ENCODE measurements at regions of chr9 and their contacts with region 1.

Region 1: DNA sequence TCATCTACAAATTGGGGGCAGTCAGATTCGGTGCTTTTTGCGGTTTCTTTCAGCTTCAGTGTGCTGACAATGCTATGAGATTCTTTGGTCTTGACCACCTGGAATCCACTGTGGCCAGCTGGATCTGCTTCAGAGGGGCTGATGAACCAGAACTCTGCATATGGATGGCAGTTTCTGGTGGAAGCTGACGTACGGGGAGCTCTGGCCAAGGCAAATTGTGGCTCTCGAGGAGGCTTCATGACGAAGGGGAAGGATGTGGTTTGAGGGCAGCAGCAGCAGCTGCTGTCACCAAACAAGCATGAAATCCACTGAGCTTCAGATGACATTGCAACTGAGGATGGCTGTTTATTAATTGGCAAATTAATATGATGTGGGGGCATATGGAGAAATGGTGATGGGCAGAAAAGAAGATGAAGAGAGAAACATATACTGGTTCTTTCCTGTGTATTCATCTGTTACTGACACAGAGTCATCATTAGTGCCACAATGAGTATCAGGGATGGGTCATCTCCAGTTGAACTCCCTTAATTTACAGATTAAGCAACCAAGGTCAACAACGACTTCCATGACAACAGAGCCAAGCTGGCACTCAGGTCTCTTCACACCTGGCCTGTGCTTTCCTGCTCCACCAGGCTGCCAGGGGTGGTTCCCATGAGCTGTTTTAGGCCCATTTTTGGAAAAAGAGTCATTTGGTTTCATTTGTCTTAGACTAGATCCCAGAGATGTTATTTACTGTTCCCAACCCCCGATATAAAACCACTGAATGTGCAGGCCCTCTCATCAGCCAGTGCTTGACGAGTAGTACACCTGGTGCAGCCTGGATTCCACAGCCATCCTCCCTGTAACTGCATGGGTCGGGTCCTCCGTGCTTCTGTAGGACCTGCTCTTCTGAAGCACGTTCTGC is 134.7 kb downstream of the AOPEP start:
- DNase-seq: no peak

Region 2: GRCh38 chr9:94700445-94700844 is 160.8 kb before region 1 on chr9:
- intact Hi-C with region 1: no loop called
- DNase-seq: no peak

Region 3: DNA sequence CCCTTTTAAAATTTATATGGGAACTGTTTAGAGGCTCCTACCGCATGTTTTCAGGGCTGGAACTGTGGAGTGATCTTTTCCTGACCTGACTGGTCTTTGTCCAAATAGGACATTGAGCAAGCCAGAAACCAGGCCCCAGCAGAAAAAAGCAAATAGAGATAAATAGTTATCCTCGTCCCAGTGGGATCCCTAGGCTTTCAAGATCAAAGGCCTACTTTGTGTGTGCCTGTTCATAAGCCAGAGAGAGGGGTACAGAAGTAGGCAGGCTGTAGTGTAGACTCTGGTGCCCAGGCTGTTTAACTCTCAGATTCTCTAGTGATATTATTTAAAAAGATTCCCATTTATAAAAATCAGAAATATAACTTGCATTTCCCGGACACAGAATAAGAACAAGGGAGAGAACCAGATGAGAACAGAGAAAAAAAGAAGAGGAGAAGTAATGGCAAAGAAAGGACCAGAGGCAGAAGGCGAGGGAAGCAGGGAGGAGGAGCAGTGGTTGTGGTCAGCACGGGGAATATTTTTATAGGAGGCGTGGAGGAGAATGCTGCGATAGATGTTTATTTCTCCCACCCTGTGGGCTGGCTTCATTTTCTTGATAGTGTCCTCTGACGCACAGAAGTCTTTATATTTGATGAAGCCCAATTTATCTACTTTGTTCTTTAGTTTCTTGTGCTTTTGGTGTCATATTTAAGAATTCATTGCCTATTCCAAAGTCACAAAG is 33.5 kb before region 1 on chr9:
- intact Hi-C with region 1: loop called (anchors 2 kb)
- DNase-seq: no peak

Region 4: DNA sequence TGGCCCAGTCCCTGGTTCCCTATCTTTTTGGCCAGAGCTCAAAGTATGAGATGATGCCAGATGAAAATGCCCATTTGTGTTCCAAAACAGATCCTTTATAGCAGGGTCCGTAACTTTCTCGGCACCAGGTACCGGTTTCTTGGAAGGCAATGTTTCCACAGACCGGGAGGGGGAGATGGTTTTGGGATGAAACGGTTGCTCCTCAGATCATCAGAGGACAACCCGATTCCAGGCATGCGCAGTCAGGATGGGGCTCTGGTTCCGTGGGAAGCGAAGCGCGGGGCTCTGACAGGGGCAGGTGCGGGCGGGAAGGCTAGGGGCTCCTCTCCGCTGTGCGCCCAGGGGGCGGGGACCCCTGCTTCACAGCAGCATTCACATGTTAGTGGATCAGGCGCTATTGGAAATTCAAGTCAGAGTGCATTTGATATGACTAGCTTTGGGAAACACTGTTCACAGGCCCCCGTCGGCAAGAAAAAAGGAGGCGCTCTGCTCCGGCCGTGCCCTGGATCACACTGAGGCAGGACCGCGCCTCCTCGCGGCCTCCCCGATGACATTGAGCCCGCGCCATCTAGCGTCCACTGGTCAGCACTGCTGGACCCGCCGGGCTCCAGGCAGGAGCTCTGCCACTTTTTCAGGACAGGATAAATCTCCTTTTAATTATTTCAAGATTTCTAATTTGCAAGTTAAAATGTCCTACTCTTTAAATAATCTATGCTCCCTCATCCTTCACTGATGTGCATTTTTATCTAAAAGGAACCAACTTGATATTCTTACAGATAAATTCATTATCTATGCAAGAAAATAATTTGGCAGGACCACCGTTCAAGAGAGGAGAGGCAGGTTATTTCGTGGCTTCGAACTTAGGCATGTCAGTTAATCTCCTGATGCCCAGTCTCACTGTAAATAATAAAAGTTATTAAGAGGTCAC is 266.3 kb after region 1 on chr9:
- intact Hi-C with region 1: loop called (anchors 10 kb)
- DNase-seq: peak; percentile 91